ENCODE measurements at regions of chr1 and their contacts with region 1.

Region 1: GRCh38 chr1:42335050-42335808 is at the start of gene FOXJ3:
- DNase-seq: peak; percentile 87 to 99 (median 92)
- ATAC-seq: peak; percentile 93
- H3K4me3 ChIP-seq: peak within 1 kb of the TSS; percentile 88
- H3K4me3 Mint-ChIP-seq: peak within 1 kb of the TSS; percentile 97
- H3K27ac ChIP-seq: peak within 1 kb of the TSS; percentile 84 to 86
- H3K27ac Mint-ChIP-seq: peak within 1 kb of the TSS; percentile 86
- H3K4me1 ChIP-seq: peaks cover 17% of the 10 kb centered on the region
- H3K4me1 Mint-ChIP-seq: peaks cover 55% of the 10 kb centered on the region
- H3K27me3 ChIP-seq: no peaks in the 10 kb centered on the region
- H3K27me3 Mint-ChIP-seq: no peaks in the 10 kb centered on the region
- CTCF ChIP-seq: no peak
- total RNA-seq, gene FOXJ3: 73.1 to 74.9 TPM

Region 2: GRCh38 chr1:41919764-41920397 is 415.3 kb before region 1 on chr1:
- CTCF ChIA-PET with region 1: no interaction called
- POLR2A ChIA-PET with region 1: no interaction called
- intact Hi-C with region 1: loop called in 1 of 2 experiments (anchors 10 kb)
- DNase-seq: peak; percentile 56 to 94 (median 72)
- ATAC-seq: peak; percentile 83
- H3K4me3 ChIP-seq: peak overlapping the region; percentile 62
- H3K4me3 Mint-ChIP-seq: peak overlapping the region; percentile 84
- H3K27ac ChIP-seq: peak overlapping the region; percentile 57 to 60
- H3K27ac Mint-ChIP-seq: peak overlapping the region; percentile 95
- H3K4me1 ChIP-seq: peaks cover 51% of the 10 kb centered on the region
- H3K4me1 Mint-ChIP-seq: peaks cover 63% of the 10 kb centered on the region
- H3K27me3 ChIP-seq: no peaks in the 10 kb centered on the region
- H3K27me3 Mint-ChIP-seq: no peaks in the 10 kb centered on the region
- CTCF ChIP-seq: no peak

Region 3: DNA sequence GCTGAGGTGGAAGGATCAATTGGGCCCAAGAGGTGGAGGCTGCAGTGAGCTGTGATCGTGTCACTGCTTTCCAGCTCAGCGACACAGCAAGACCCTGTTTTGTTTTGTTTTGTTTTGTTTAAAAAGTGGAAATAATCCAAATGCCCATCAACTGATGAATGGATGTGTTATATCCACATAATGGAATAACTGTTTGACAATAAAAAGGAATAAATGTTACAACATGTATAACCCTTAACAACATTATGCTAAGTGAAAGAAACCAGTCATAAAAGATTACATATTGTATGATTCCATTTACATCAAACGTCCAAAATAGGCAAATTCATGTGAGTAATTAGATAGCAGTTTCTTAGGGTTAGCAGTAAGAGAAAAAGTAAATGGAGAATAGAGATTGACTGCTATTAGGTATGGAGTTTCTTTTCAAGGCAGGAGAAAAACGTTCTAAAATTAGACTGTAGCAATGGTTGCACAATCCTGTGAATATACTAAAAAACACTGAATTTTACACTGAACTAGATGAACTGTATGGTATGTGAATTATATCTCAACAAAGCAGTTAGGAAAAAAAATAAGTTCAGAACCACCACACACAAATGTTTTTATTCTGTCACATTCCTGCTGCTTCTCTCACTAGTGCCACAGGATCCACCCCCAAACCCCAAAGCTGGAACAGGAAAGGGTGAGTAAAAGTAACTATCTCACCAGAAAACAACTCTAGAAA is 15.9 kb before region 1 on chr1:
- CTCF ChIA-PET with region 1: interaction called, 5 read pairs
- POLR2A ChIA-PET with region 1: interaction called, 31 read pairs
- intact Hi-C with region 1: loop called (anchors 2 kb)
- DNase-seq: peak in 4 of 14 experiments; percentile 20 to 53 (median 35)
- ATAC-seq: peak; percentile 57
- H3K4me3 ChIP-seq: peak overlapping the region; percentile 28
- H3K4me3 Mint-ChIP-seq: peak overlapping the region; percentile 80
- H3K27ac ChIP-seq: peak overlapping the region; percentile 40 to 64
- H3K27ac Mint-ChIP-seq: peak overlapping the region; percentile 81
- H3K4me1 ChIP-seq: peaks cover 23% of the 10 kb centered on the region
- H3K4me1 Mint-ChIP-seq: peaks cover 94% of the 10 kb centered on the region
- H3K27me3 ChIP-seq: no peaks in the 10 kb centered on the region
- H3K27me3 Mint-ChIP-seq: no peaks in the 10 kb centered on the region
- CTCF ChIP-seq: no peak

Region 4: DNA sequence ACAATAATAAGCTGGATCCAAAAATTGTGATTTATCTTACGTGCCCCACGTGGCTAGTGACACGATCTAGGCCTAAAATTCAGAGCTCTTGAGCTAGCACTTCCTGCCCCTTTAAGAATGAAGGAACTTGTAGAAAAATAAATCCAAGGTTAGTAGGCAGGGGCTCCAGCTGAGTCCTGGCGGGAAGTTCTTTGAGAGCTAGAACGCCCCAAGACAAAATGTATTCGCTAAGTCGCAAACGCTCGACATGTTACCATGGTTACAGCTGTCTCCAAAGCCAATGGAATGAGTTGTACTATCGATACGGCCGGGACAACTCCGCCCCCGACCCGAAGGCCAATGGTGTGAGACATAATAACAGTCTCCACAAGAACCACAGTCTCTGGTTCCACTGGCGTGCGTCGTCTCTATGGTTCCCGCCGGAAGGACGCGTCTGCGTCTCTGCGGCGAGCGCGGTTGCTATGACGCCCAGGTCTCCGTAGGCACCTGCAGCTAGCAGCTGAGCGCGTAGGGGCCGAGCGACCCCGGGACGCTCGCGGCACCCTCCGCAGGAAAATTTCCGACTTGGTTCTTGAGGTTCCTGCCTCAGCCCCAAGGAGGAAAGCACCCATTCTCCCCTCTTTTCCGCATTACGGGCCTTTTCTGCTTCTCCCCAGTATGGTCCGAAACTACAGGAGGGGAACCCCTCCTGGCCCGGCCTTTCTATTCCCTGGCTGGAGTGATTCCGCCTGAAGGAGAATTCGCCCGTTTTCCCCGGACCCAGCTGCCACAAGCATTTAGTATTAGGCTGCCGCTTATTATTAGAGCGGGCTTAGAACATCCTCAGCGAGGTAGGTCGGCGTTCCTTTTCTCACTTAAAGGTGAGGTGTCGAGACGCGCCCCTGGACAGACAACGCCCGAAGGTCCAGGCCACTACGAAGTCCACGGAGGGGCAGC is 127.9 kb after region 1 on chr1 and contains the start of gene CCDC30:
- CTCF ChIA-PET with region 1: interaction called, 3 read pairs
- POLR2A ChIA-PET with region 1: no interaction called
- intact Hi-C with region 1: loop called in 1 of 2 experiments (anchors 2 kb)
- DNase-seq: peak; percentile 91 to 99 (median 95)
- ATAC-seq: peak; percentile 97
- H3K4me3 ChIP-seq: peak within 1 kb of the TSS; percentile 69
- H3K4me3 Mint-ChIP-seq: peak within 1 kb of the TSS; percentile 87
- H3K27ac ChIP-seq: peak within 1 kb of the TSS; percentile 49 to 86
- H3K27ac Mint-ChIP-seq: peak within 1 kb of the TSS; percentile 86
- H3K4me1 ChIP-seq: peaks cover 15% of the 10 kb centered on the region
- H3K4me1 Mint-ChIP-seq: peaks cover 52% of the 10 kb centered on the region
- H3K27me3 ChIP-seq: no peaks in the 10 kb centered on the region
- H3K27me3 Mint-ChIP-seq: peaks cover 4% of the 10 kb centered on the region
- CTCF ChIP-seq: no peak
- total RNA-seq, gene CCDC30: 1.2 to 1.3 TPM

Region 5: GRCh38 chr1:42924082-42924850 is 589.0 kb after region 1 on chr1:
- CTCF ChIA-PET with region 1: no interaction called
- POLR2A ChIA-PET with region 1: no interaction called
- intact Hi-C with region 1: loop called in 1 of 2 experiments (anchors 5 kb)
- DNase-seq: peak; percentile 81 to 94 (median 88)
- ATAC-seq: peak; percentile 89
- H3K4me3 ChIP-seq: peak overlapping the region; percentile 81
- H3K4me3 Mint-ChIP-seq: peak overlapping the region; percentile 94
- H3K27ac ChIP-seq: peak overlapping the region; percentile 66 to 86
- H3K27ac Mint-ChIP-seq: peak overlapping the region; percentile 84
- H3K4me1 ChIP-seq: peaks cover 22% of the 10 kb centered on the region
- H3K4me1 Mint-ChIP-seq: peaks cover 40% of the 10 kb centered on the region
- H3K27me3 ChIP-seq: no peaks in the 10 kb centered on the region
- H3K27me3 Mint-ChIP-seq: no peaks in the 10 kb centered on the region
- CTCF ChIP-seq: no peak

Measured in CD4-positive, alpha-beta T cell (primary cell).